Lower leg skin (tissue), 4 donors: ENCODE measurements at regions of chr3 and their contacts with region 1.

Region 1: GRCh38 chr3:122021811-122022401 is at the start of gene ILDR1:
- DNase-seq: no peak
- H3K4me3 ChIP-seq: peak within 1 kb of the TSS; percentile 5
- CTCF ChIP-seq: no peak
- POLR2A ChIP-seq: no peak
- total RNA-seq, gene ILDR1: 1.8 to 4.0 (median 2.4) TPM

Region 2: DNA sequence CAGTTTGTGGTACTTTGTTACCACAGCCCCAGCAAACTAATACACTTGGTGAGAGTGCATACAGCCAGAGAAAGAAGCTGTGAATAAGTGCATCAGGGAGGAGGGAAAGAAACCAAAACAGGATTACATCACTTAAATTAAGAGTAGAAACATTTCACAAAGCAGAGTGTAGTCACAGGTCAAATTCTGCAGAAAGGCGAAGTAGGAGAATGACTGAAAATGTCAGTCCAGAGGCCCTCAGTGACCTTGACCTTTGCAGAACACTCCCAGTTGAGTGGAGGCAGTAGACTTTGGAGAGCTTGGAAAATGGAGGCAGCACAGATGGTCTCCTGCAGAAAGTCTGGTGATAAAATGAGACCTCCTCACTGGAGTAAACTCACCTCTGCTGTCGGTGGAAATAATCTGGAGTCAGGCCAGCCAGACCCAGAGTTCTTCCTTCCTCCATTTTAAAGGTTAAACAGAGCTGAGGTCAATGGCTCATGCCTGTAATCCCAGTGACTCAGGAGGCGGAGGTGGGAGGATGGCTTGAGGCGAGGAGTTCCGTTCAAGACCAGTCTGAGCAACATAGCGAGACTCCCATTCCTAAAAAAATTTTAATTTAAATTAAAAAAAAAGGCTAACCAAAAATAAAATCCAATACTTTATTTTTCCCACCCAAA is 38.3 kb after region 1 on chr3:
- intact Hi-C with region 1: loop called (anchors 1 kb)
- DNase-seq: no peak
- H3K4me3 ChIP-seq: no peak overlapping the region
- CTCF ChIP-seq: no peak
- POLR2A ChIP-seq: no peak

Region 3: GRCh38 chr3:122146466-122146865 is 124.6 kb after region 1 on chr3:
- intact Hi-C with region 1: no loop called
- DNase-seq: no peak
- H3K4me3 ChIP-seq: no peak overlapping the region
- CTCF ChIP-seq: no peak
- POLR2A ChIP-seq: no peak